Activated T-helper 1 cell treated with anti-CD3 and anti-CD28 coated beads, Interleukin-12 subunit alpha, Interleukin-12 subunit beta, Interleukin-2, Interleukin-4 antibody, amounts not matched to agents 30 ng/mL and 10 ng/mL and 1 ng/mL, durations not matched to agents 14 hours and 24 hours and 36 hours (primary cell): ENCODE measurements at regions of chr3 and their contacts with region 1.

Region 1: DNA sequence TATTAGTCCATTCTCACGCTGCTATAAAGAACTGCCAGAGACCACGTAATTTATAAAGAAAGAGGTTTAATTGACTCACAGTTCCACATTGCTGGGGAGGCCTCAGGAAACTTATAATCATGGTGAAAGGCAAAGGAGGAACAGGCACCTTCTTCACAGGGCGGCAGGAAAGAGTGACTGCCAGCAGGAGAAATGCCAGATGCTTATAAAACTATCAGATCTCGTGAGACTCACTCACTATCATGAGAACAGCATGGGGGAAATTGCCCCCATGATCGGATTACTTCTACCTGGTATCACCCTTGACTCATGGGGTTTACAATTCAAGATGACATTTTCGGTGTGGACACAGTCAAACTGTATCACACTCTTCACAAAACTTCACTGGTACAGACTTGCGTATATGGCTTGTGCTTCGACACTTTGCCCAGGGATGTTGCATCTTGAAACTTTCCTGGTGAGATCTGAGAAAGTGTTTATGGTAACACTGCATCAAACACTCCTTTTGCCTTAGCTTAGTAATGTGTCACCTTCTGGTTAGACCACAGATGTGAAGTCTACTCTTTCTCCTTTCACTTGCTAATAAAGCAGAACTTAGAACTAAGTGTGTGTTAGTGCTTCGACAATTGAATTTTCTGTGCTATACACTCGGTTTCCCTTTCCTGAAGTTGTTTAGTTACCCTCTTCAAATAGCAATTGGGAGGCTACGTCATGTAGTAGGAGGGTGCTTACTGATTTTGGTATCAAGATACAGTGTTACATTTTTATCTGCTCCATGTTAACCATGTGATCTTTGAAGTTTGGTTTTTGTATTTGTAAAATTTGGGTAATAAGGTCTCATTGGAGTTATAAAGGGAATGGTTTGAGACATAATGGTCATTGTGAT is 185.7 kb downstream of the LPP start:
- DNase-seq: peak; percentile 39
- H3K4me3 Mint-ChIP-seq: peak overlapping the region; percentile 63
- H3K27ac Mint-ChIP-seq: peak overlapping the region; percentile 86
- H3K4me1 Mint-ChIP-seq: peaks cover 37% of the 10 kb centered on the region
- H3K27me3 Mint-ChIP-seq: peaks cover 24% of the 10 kb centered on the region

Region 2: GRCh38 chr3:188037216-188037718 is 302.4 kb before region 1 on chr3:
- intact Hi-C with region 1: no loop called
- DNase-seq: no peak
- H3K4me3 Mint-ChIP-seq: no peak overlapping the region
- H3K27ac Mint-ChIP-seq: no peak overlapping the region
- H3K4me1 Mint-ChIP-seq: peaks cover 10% of the 10 kb centered on the region
- H3K27me3 Mint-ChIP-seq: peaks cover 5% of the 10 kb centered on the region

Region 3: GRCh38 chr3:188154014-188154808 is 185.4 kb before region 1 on chr3 and contains the start of gene LPP:
- intact Hi-C with region 1: loop called (anchors 5 kb)
- DNase-seq: peak; percentile 90
- H3K4me3 Mint-ChIP-seq: peak within 1 kb of the TSS; percentile 89
- H3K27ac Mint-ChIP-seq: peak within 1 kb of the TSS; percentile 87
- H3K4me1 Mint-ChIP-seq: peaks cover 71% of the 10 kb centered on the region
- H3K27me3 Mint-ChIP-seq: no peaks in the 10 kb centered on the region
- total RNA-seq, gene LPP: 38.2 and 46.4 TPM in 2 replicates

Region 4: DNA sequence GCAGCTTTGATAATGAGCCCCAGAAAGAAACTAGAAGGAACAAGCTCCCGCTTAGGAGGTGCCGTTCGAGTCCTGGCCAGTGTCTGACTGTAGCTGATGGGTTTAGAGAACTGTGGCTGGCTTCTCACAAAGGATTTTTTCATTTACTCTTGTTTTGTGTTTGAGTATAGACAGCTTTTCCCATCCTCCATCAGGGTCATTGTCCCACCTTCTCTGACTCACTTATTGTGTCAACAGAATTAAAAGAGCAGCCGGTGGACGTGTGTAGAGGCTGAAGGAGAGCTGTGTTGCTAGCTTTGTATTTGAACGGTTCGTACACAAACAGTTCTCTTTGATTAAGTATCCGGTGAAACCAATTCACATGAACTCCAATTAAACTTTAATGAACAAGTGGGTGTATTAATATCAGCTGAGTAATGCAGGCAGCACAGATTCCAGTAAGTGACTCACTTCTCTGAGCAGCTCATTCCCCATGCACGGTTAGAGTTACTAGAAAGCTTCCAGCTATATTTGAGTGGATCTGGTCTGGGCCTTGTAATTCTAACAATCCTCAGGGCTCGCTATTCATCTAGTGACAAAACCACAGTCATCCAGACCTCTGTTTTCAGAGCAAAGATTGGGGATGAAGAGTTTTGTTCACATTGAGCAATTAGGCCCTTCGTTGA is 44.7 kb before region 1 on chr3:
- intact Hi-C with region 1: loop called (anchors 1 kb)
- DNase-seq: no peak
- H3K4me3 Mint-ChIP-seq: no peak overlapping the region
- H3K27ac Mint-ChIP-seq: peak overlapping the region; percentile 33
- H3K4me1 Mint-ChIP-seq: peaks cover 86% of the 10 kb centered on the region
- H3K27me3 Mint-ChIP-seq: no peaks in the 10 kb centered on the region

Region 5: GRCh38 chr3:188326111-188326510 is 13.5 kb before region 1 on chr3:
- intact Hi-C with region 1: loop called (anchors 1 kb)
- DNase-seq: no peak
- H3K4me3 Mint-ChIP-seq: no peak overlapping the region
- H3K27ac Mint-ChIP-seq: no peak overlapping the region
- H3K4me1 Mint-ChIP-seq: peaks cover 60% of the 10 kb centered on the region
- H3K27me3 Mint-ChIP-seq: peaks cover 1% of the 10 kb centered on the region

Region 6: GRCh38 chr3:188683032-188683521 is 343.4 kb after region 1 on chr3:
- intact Hi-C with region 1: loop called (anchors 1 kb)
- DNase-seq: no peak
- H3K4me3 Mint-ChIP-seq: no peak overlapping the region
- H3K27ac Mint-ChIP-seq: peak overlapping the region; percentile 74
- H3K4me1 Mint-ChIP-seq: peaks cover 28% of the 10 kb centered on the region
- H3K27me3 Mint-ChIP-seq: no peaks in the 10 kb centered on the region

Region 7: GRCh38 chr3:188954590-188955208 is 615.0 kb after region 1 on chr3:
- intact Hi-C with region 1: loop called (anchors 5 kb)
- DNase-seq: peak; percentile 68
- H3K4me3 Mint-ChIP-seq: no peak overlapping the region
- H3K27ac Mint-ChIP-seq: no peak overlapping the region
- H3K4me1 Mint-ChIP-seq: peaks cover 46% of the 10 kb centered on the region
- H3K27me3 Mint-ChIP-seq: no peaks in the 10 kb centered on the region